IMR-90 (cell line): ENCODE measurements at regions of chr22 and their contacts with region 1.

Region 1: GRCh38 chr22:22463855-22464540 is 44.5 kb downstream of the ZNF280B start:
- DNase-seq: peak; percentile 57
- ATAC-seq: peak; percentile 88
- H3K4me3 ChIP-seq: no peak overlapping the region
- H3K27ac ChIP-seq: no peak overlapping the region
- H3K4me1 ChIP-seq: no peaks in the 10 kb centered on the region
- H3K27me3 ChIP-seq: peaks cover 1% of the 10 kb centered on the region; the same call in 1 of the 2 replicates
- CTCF ChIP-seq: peak; percentile 82
- POLR2A ChIP-seq: no peak
- RAD21 ChIP-seq: peak; percentile 83

Region 2: GRCh38 chr22:22207845-22208564 is 256.0 kb before region 1 on chr22:
- CTCF ChIA-PET with region 1: no interaction called
- POLR2A ChIA-PET with region 1: no interaction called
- dilution Hi-C with region 1: no loop called
- in situ Hi-C with region 1: no loop called
- intact Hi-C with region 1: loop called (anchors 1 kb)
- DNase-seq: peak; percentile 70
- ATAC-seq: peak; percentile 97
- H3K4me3 ChIP-seq: no peak overlapping the region
- H3K27ac ChIP-seq: no peak overlapping the region
- H3K4me1 ChIP-seq: no peaks in the 10 kb centered on the region
- H3K27me3 ChIP-seq: peaks cover 23% of the 10 kb centered on the region
- CTCF ChIP-seq: peak; percentile 79
- POLR2A ChIP-seq: no peak
- RAD21 ChIP-seq: peak; percentile 86

Region 3: DNA sequence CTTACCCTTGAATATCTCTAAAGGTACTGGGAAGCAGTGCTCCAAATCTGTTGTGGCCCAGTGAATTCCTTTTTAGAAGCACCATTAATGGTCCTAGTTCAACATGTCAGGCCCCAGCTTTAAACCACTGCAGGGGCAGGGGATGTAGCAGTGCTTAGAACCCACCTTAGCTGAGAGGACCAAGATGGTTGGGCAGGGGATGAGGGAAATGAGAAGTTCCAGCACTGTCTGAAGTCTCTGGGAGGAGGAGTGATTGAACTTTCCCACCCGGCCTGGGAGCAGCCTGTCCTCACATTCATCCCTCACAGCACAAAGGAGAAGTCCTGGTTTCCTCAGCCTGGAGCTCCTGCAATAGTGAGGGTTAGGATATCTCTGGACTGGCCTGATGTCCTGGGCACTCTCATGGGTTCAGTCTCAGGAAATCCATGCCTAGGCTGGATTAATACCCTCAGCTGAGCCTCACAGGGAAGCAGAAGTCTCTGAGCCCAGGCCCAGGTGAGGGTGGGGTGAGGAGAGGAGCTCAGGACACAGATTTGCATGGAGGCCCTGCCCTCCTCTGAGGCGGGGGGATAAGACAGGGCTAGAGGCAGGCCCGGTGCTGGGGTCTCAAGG is 123.7 kb after region 1 on chr22:
- CTCF ChIA-PET with region 1: interaction called, 4 read pairs
- POLR2A ChIA-PET with region 1: no interaction called
- dilution Hi-C with region 1: no loop called
- in situ Hi-C with region 1: no loop called
- intact Hi-C with region 1: loop called (anchors 5 kb)
- DNase-seq: no peak
- ATAC-seq: no peak
- H3K4me3 ChIP-seq: no peak overlapping the region
- H3K27ac ChIP-seq: no peak overlapping the region
- H3K4me1 ChIP-seq: no peaks in the 10 kb centered on the region
- H3K27me3 ChIP-seq: peaks cover 10% of the 10 kb centered on the region
- CTCF ChIP-seq: no peak
- POLR2A ChIP-seq: no peak
- RAD21 ChIP-seq: no peak

Region 4: DNA sequence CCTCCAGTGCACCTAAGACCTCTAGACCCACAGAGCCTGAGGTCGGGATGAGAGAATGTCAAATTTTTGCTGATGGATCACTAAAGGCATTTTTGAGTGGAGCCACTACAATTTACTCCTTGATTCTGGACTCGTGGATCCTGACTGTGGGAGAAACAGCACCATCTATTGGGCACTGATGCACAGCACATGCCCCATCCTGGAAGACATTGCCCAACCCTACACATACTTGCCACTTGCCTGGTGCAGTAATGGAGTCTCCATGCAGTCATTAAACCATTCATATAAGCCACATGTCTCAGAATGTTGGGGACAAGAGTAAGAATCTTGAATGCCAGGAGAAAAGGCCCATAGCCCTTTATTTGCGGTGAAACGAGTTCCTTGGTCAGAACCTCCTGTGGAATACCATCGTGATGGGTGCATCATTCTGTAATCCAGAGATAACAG is 284.3 kb after region 1 on chr22:
- CTCF ChIA-PET with region 1: no interaction called
- POLR2A ChIA-PET with region 1: no interaction called
- dilution Hi-C with region 1: no loop called
- in situ Hi-C with region 1: no loop called
- intact Hi-C with region 1: loop called (anchors 5 kb)
- DNase-seq: peak; percentile 52
- ATAC-seq: peak; percentile 98
- H3K4me3 ChIP-seq: no peak overlapping the region
- H3K27ac ChIP-seq: no peak overlapping the region
- H3K4me1 ChIP-seq: no peaks in the 10 kb centered on the region
- H3K27me3 ChIP-seq: peaks cover 9% of the 10 kb centered on the region
- CTCF ChIP-seq: peak; percentile 82
- POLR2A ChIP-seq: no peak
- RAD21 ChIP-seq: peak; percentile 79

Region 5: DNA sequence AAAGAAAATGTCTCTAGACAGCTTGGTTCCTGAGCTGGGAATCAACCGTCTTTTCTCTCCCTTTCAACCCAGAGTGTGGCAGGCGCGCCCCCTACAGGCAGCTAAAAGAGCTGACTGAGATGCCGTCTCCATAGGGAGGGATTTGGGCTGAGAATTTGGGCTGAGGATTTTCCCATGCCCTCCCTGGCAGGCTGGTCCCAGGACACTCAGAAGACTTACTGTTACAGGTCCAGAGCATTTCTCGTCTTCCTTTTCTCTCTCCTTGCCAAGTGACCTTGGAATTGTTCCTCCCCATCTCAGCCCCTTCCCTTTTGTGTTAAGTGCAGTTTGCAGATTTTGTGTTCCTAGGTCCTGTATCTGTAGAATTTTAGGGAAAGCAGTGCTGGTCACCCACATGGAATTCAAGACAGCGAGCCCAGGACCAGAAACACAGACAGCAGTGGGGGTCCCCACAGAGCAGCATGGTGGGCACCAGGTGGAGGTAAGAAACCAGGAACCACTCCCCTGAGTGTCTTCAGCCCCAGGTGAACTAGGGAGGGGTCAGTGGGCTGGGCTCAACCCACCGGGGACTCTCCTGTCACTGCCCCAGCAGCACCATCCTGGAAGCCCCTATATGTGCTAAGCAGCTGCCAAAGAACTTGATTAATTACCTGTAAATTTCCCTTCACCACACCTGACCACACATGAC is 413.7 kb after region 1 on chr22:
- CTCF ChIA-PET with region 1: no interaction called
- POLR2A ChIA-PET with region 1: no interaction called
- dilution Hi-C with region 1: no loop called
- in situ Hi-C with region 1: no loop called
- intact Hi-C with region 1: loop called (anchors 1 kb)
- DNase-seq: peak; percentile 45
- ATAC-seq: peak; percentile 82
- H3K4me3 ChIP-seq: no peak overlapping the region
- H3K27ac ChIP-seq: no peak overlapping the region
- H3K4me1 ChIP-seq: no peaks in the 10 kb centered on the region
- H3K27me3 ChIP-seq: peaks cover 6% of the 10 kb centered on the region
- CTCF ChIP-seq: peak; percentile 74
- POLR2A ChIP-seq: no peak
- RAD21 ChIP-seq: peak; percentile 67

Region 6: GRCh38 chr22:22959147-22959827 is 495.3 kb after region 1 on chr22:
- CTCF ChIA-PET with region 1: interaction called, 9 read pairs
- POLR2A ChIA-PET with region 1: no interaction called
- dilution Hi-C with region 1: no loop called
- in situ Hi-C with region 1: no loop called
- intact Hi-C with region 1: loop called (anchors 1 kb)
- DNase-seq: peak; percentile 66
- ATAC-seq: peak; percentile 73
- H3K4me3 ChIP-seq: no peak overlapping the region
- H3K27ac ChIP-seq: no peak overlapping the region
- H3K4me1 ChIP-seq: no peaks in the 10 kb centered on the region
- H3K27me3 ChIP-seq: peaks cover 3% of the 10 kb centered on the region
- CTCF ChIP-seq: peak; percentile 99
- POLR2A ChIP-seq: no peak
- RAD21 ChIP-seq: peak; percentile 91